H1 (cell line): ENCODE measurements at regions of chr6 and their contacts with region 1.

Region 1: GRCh38 chr6:73461537-73462350 is at the start of gene MTO1:
- DNase-seq: peak in 1 of 2 experiments; percentile 77
- H3K4me3 ChIP-seq: peak within 1 kb of the TSS; percentile 66 to 98 (median 86)
- H3K27ac ChIP-seq: peak within 1 kb of the TSS; percentile 62; the same call in 1 of the 2 replicates
- H3K4me1 ChIP-seq: no peaks in the 10 kb centered on the region; a peak in 1 of 7 replicates
- H3K27me3 ChIP-seq: no peaks in the 10 kb centered on the region
- CTCF ChIP-seq: no peak
- EP300 ChIP-seq: no peak
- POLR2A ChIP-seq: peak; percentile 42 to 84
- RAD21 ChIP-seq: no peak
- total RNA-seq, gene MTO1: 29.3 and 31.6 TPM in 2 replicates

Region 2: DNA sequence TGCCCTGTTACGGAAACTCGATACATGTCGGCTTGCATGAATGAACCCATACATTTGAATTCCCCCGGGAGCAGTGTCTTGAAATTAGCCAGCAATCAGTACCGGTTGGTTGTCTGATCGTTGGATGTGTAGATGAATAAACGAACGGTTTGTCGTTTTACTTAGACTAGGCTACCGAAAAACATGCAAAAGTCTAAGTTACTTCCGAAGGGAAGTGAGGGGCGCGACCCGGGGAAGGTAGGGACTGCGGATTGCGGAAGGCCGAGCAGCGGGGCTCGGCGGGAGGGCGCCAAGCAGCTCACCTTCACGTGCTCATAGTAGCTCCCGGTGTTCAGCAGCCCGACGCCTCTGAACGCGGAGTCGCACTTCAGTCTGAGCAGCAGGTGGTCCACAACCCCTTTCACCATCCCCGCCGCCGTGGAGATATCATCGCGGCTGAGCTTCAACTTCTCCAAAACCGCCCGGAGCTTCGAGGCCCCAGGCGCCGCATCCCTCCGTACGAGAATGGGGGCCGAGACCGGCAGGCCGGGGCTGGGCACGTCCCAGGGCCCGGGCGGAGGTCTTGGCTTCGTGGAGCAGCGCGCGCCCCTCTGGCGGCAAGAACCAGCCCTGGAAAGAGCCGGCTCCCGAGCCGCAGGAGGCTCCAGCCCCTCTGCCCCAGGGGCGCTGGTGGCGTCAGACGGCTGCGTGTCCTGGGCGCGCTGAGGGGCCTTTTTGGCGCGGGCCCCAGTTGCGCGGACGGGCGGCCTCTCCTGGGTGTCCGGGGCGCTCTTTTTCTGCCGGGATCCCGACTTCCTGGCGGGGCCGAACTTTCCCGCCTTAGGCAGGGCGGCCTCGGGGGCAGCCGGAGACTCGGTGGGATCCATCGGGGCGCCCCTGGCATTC is 10.3 kb before region 1 on chr6:
- CTCF ChIA-PET with region 1: interaction called, 3 read pairs
- POLR2A ChIA-PET with region 1: interaction called, 35 read pairs
- DNase-seq: peak; percentile 39 to 73
- H3K4me3 ChIP-seq: peak overlapping the region; percentile 51 to 82 (median 62)
- H3K27ac ChIP-seq: no peak overlapping the region; the same call in 1 of the 2 replicates
- H3K4me1 ChIP-seq: peaks cover 0 to 2% (median under 1%) of the 10 kb centered on the region in 4 experiments; a peak in 2 of 7 replicates
- H3K27me3 ChIP-seq: peaks cover 0 to 6% (median 3%) of the 10 kb centered on the region in 4 experiments; a peak in 4 of 7 replicates
- CTCF ChIP-seq: no peak
- EP300 ChIP-seq: no peak
- POLR2A ChIP-seq: peak in 1 of 2 experiments; percentile 35; a peak in 1 of 3 replicates
- RAD21 ChIP-seq: no peak

Region 3: DNA sequence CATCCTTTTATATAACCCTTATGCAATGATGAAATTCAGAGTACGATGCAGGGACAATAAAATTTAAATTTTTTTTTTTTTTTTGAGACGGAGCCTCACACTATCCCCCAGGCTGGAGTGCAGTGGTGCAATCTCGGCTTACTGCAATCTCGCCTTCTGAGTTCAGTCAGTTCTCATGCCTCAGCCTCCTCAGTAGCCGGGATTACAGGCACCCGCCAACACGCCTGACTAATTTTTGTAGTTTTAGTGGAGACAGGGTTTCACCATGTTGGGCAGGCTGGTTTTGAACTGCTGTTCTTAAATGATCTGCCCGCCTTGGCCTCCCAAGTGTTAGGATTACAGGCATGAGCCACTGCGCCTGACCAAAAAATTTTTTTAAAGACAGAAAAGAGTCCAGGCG is 15.0 kb after region 1 on chr6:
- CTCF ChIA-PET with region 1: interaction called, 4 read pairs
- POLR2A ChIA-PET with region 1: interaction called, 11 read pairs
- DNase-seq: no peak
- H3K4me3 ChIP-seq: no peak overlapping the region
- H3K27ac ChIP-seq: no peak overlapping the region
- H3K4me1 ChIP-seq: no peaks in the 10 kb centered on the region
- H3K27me3 ChIP-seq: no peaks in the 10 kb centered on the region
- CTCF ChIP-seq: no peak
- EP300 ChIP-seq: no peak
- POLR2A ChIP-seq: no peak
- RAD21 ChIP-seq: no peak

Region 4: DNA sequence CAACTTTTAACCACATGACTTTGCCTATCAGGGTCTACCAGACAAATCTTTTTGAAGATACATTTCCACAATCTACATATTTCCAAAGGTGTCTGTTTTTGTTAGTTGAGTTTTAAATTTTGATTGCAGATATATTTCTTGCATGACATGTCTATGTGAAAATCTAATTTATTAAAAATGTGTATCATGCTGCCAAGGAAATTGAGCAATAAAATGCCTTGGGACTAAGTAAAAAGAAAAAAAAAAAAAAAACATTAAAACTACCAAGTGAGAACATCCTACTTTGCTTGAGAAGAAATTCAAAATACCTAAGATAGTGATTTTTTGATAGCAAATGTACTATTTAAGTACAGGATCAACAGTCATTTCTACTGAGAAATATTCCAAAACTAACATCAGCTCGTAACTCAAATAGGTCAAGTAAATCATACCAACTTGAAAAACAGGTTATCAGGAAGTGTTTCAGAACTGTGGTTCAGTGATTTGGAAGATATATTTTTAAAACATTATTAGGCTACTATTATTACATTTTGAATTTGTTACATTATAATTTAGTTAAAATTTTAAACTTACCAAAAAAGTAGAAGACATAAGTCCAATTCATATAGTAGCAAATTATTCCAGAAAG is 174.4 kb after region 1 on chr6:
- CTCF ChIA-PET with region 1: no interaction called
- POLR2A ChIA-PET with region 1: no interaction called
- DNase-seq: no peak
- H3K4me3 ChIP-seq: no peak overlapping the region
- H3K27ac ChIP-seq: no peak overlapping the region
- H3K4me1 ChIP-seq: no peaks in the 10 kb centered on the region
- H3K27me3 ChIP-seq: no peaks in the 10 kb centered on the region
- CTCF ChIP-seq: no peak
- EP300 ChIP-seq: no peak
- POLR2A ChIP-seq: no peak
- RAD21 ChIP-seq: no peak

Region 5: DNA sequence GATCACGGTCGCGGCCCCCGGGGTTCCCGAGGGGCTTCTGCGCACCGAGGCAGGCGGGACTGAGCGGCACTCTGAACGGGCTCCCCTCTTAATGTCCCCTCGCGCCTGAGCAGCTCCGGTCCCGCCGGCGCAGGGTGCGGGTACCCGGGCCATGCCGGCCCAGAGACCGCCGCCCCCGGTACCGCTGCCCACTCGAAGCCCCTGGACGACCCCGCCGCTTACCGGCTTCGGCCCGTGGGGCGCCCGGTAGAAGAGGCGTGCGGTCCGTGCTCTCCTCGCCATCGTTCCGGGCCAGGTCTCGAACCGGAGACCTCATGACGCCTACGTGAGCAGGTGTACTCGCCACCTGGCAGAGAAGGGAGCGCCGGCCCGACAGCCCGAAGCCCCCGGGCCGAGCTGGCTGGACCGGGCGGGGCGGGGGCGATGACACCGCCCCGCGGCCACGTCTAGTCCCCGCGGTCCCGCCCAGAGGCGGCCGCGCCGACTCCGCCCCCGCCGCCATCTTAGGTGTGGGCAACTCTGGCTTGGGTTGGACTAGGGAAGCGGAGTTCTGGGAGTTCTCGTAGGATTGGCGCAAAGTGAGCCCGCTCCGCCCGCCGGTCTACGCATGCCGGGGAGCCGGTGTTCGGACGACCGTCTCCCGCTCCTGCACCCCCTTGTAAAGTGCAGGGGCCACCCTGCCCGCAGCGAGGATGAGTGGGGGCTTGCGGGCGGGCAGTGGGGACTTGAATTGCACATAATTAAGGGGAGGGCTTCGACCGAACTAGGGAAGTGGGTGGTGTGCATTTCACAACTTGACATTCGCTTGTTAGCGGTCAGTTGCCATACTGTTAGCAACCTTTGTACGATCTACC is 192.1 kb after region 1 on chr6 and contains the start of gene SLC17A5:
- CTCF ChIA-PET with region 1: no interaction called
- POLR2A ChIA-PET with region 1: interaction called, 16 read pairs
- DNase-seq: peak; percentile 87 to 94
- H3K4me3 ChIP-seq: peak within 1 kb of the TSS; percentile 63 to 99 (median 86)
- H3K27ac ChIP-seq: peak within 1 kb of the TSS; percentile 71; the same call in 1 of the 2 replicates
- H3K4me1 ChIP-seq: peaks cover 0 to 9% (median 5%) of the 10 kb centered on the region in 4 experiments; a peak in 3 of 7 replicates
- H3K27me3 ChIP-seq: no peaks in the 10 kb centered on the region
- CTCF ChIP-seq: no peak
- EP300 ChIP-seq: 0 out of 3 replicates have a peak, but pooled peaks of 1 of the 2 experiments have one; percentile 38
- POLR2A ChIP-seq: peak; percentile 63 to 82
- RAD21 ChIP-seq: no peak
- total RNA-seq, gene SLC17A5: 11.9 and 14.2 TPM in 2 replicates